CD8-positive, alpha-beta T cell (primary cell): ENCODE measurements at regions of chr4 and their contacts with region 1.

Region 1: GRCh38 chr4:145936142-145936996 is 2.3 kb downstream of the ZNF827 start:
- DNase-seq: peak; percentile 41 to 88 (median 70)
- ATAC-seq: peak; percentile 51
- H3K4me3 ChIP-seq: peak overlapping the region; percentile 83 to 84
- H3K4me3 Mint-ChIP-seq: peak overlapping the region; percentile 94
- H3K27ac ChIP-seq: peak overlapping the region; percentile 58 to 63
- H3K27ac Mint-ChIP-seq: peak overlapping the region; percentile 97
- H3K4me1 ChIP-seq: peaks cover 28% of the 10 kb centered on the region
- H3K4me1 Mint-ChIP-seq: peaks cover 47% of the 10 kb centered on the region
- H3K27me3 ChIP-seq: no peaks in the 10 kb centered on the region
- H3K27me3 Mint-ChIP-seq: no peaks in the 10 kb centered on the region
- CTCF ChIP-seq: peak; percentile 27

Region 2: GRCh38 chr4:145618932-145619638 is 317.3 kb before region 1 on chr4 and contains the start of gene MMAA:
- CTCF ChIA-PET with region 1: interaction called, 3 read pairs
- POLR2A ChIA-PET with region 1: interaction called, 4 read pairs
- intact Hi-C with region 1: loop called (anchors 1 to 2 kb)
- DNase-seq: peak; percentile 86 to 97 (median 94)
- ATAC-seq: peak; percentile 93
- H3K4me3 ChIP-seq: peak within 1 kb of the TSS; percentile 89 to 97
- H3K4me3 Mint-ChIP-seq: peak within 1 kb of the TSS; percentile 96
- H3K27ac ChIP-seq: peak within 1 kb of the TSS; percentile 91 to 97
- H3K27ac Mint-ChIP-seq: peak within 1 kb of the TSS; percentile 98
- H3K4me1 ChIP-seq: peaks cover 22% of the 10 kb centered on the region
- H3K4me1 Mint-ChIP-seq: peaks cover 45% of the 10 kb centered on the region
- H3K27me3 ChIP-seq: no peaks in the 10 kb centered on the region
- H3K27me3 Mint-ChIP-seq: no peaks in the 10 kb centered on the region
- CTCF ChIP-seq: peak; percentile 38
- total RNA-seq, gene MMAA: 7.6 to 9.4 TPM

Region 3: GRCh38 chr4:145871209-145871608 is 65.2 kb before region 1 on chr4:
- CTCF ChIA-PET with region 1: no interaction called
- POLR2A ChIA-PET with region 1: no interaction called
- intact Hi-C with region 1: no loop called
- DNase-seq: no peak
- ATAC-seq: no peak
- H3K4me3 ChIP-seq: no peak overlapping the region
- H3K4me3 Mint-ChIP-seq: no peak overlapping the region
- H3K27ac ChIP-seq: no peak overlapping the region
- H3K27ac Mint-ChIP-seq: no peak overlapping the region
- H3K4me1 ChIP-seq: no peaks in the 10 kb centered on the region
- H3K4me1 Mint-ChIP-seq: peaks cover 26% of the 10 kb centered on the region
- H3K27me3 ChIP-seq: no peaks in the 10 kb centered on the region
- H3K27me3 Mint-ChIP-seq: no peaks in the 10 kb centered on the region
- CTCF ChIP-seq: no peak

Region 4: DNA sequence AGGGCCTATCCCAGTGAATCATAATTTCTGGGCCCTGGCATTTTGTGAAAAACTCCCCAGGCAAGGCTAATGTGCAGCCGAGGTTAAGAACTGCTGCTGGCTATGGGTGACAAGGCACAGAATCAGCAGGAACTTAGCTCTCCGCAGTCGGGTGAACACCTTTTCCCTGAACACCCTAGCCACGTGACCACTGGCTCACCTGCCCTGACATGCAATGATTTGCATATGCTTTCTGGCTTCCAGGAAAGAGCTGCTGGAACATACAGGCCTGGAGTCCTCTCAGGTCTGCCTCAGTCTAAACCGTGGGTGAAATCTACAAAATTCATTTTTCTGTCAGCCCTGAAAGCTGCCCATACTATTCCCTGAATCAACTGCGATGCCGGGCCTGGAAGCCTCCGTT is 54.4 kb before region 1 on chr4:
- CTCF ChIA-PET with region 1: no interaction called
- POLR2A ChIA-PET with region 1: no interaction called
- intact Hi-C with region 1: loop called in 1 of 2 experiments (anchors 5 kb)
- DNase-seq: no peak
- ATAC-seq: no peak
- H3K4me3 ChIP-seq: no peak overlapping the region
- H3K4me3 Mint-ChIP-seq: no peak overlapping the region
- H3K27ac ChIP-seq: no peak overlapping the region
- H3K27ac Mint-ChIP-seq: no peak overlapping the region
- H3K4me1 ChIP-seq: no peaks in the 10 kb centered on the region
- H3K4me1 Mint-ChIP-seq: peaks cover 37% of the 10 kb centered on the region
- H3K27me3 ChIP-seq: no peaks in the 10 kb centered on the region
- H3K27me3 Mint-ChIP-seq: no peaks in the 10 kb centered on the region
- CTCF ChIP-seq: no peak

Region 5: DNA sequence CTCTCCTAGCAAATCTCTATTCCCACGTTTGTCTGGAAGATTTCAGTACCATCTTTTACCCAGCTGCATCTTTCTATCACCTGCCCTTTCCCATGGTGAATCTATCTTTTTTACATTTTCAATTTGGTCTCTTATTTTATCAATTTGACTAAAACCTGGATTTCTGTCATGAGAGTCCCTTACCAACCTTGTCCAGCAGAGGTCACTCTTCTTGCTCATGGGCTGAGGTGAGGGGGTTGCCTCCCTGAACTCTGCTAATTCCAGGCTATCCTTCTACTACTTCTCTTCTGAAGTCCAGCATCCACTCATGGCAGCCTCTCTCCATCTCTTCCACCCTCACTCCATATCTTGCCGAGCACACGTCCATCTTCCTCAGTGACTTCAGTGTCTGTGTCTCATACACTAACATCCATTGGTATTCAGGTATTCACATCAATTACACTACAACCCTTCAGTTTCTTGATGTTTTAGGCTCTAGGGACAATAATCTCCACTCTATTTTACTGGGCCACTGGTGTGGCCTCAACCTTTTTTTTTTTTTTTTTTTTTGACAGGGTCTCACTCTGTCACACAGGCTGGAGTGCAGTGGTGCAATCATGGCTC is 20.0 kb after region 1 on chr4:
- CTCF ChIA-PET with region 1: interaction called, 7 read pairs
- POLR2A ChIA-PET with region 1: no interaction called
- intact Hi-C with region 1: loop called in 1 of 2 experiments (anchors 1 kb)
- DNase-seq: peak in 7 of 9 experiments; percentile 9 to 68 (median 33)
- ATAC-seq: peak; percentile 72
- H3K4me3 ChIP-seq: no peak overlapping the region
- H3K4me3 Mint-ChIP-seq: no peak overlapping the region
- H3K27ac ChIP-seq: no peak overlapping the region
- H3K27ac Mint-ChIP-seq: no peak overlapping the region
- H3K4me1 ChIP-seq: no peaks in the 10 kb centered on the region
- H3K4me1 Mint-ChIP-seq: no peaks in the 10 kb centered on the region
- H3K27me3 ChIP-seq: no peaks in the 10 kb centered on the region
- H3K27me3 Mint-ChIP-seq: peaks cover 2% of the 10 kb centered on the region
- CTCF ChIP-seq: peak; percentile 71

Region 6: DNA sequence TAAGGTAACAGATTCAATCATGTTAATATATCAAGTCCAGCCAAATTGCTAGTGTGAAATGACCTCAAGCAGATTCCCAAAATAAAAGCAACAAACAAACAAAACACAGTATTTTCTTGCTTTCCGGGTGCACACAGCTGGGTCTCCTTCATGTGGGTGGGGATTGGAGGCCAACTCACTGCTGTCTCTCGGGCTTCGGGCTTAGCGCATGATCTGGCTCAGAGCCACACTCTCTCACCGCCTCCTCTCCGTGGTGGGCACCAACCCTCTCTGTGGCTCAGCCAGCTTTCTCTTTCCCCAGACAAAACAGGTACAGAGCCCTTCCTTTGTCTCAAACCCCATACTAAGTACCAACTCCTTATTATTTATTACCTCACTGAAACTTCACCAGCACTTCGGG is 275.1 kb after region 1 on chr4:
- CTCF ChIA-PET with region 1: no interaction called
- POLR2A ChIA-PET with region 1: no interaction called
- intact Hi-C with region 1: no loop called
- DNase-seq: no peak
- ATAC-seq: no peak
- H3K4me3 ChIP-seq: no peak overlapping the region
- H3K4me3 Mint-ChIP-seq: no peak overlapping the region
- H3K27ac ChIP-seq: no peak overlapping the region
- H3K27ac Mint-ChIP-seq: no peak overlapping the region
- H3K4me1 ChIP-seq: no peaks in the 10 kb centered on the region
- H3K4me1 Mint-ChIP-seq: no peaks in the 10 kb centered on the region
- H3K27me3 ChIP-seq: no peaks in the 10 kb centered on the region
- H3K27me3 Mint-ChIP-seq: peaks cover 8% of the 10 kb centered on the region
- CTCF ChIP-seq: no peak

Region 7: DNA sequence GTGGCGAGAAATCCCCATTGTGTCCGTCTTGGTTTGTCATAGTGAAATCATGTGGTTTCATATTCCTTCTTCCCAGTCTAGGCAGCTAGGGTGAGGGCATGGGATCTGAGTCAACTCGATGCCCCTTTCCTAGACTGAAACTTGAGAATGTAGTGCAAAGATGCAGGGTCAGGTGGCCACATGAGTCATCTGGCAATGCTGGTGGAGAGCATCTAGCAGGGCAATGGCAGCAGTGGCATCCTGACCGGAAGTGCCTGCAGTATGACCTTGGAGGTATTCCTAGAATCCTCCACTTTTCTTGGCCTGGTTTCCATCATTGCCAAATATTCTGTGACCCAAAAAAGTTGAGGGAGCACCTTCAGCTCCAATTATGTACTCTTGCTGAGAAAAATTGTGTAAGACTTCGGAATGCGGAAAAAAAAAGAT is 1641.7 kb after region 1 on chr4:
- CTCF ChIA-PET with region 1: no interaction called
- POLR2A ChIA-PET with region 1: no interaction called
- intact Hi-C with region 1: no loop called
- DNase-seq: no peak
- ATAC-seq: no peak
- H3K4me3 ChIP-seq: no peak overlapping the region
- H3K4me3 Mint-ChIP-seq: no peak overlapping the region
- H3K27ac ChIP-seq: no peak overlapping the region
- H3K27ac Mint-ChIP-seq: no peak overlapping the region
- H3K4me1 ChIP-seq: no peaks in the 10 kb centered on the region
- H3K4me1 Mint-ChIP-seq: no peaks in the 10 kb centered on the region
- H3K27me3 ChIP-seq: no peaks in the 10 kb centered on the region
- H3K27me3 Mint-ChIP-seq: peaks cover 6% of the 10 kb centered on the region
- CTCF ChIP-seq: no peak

Region 8: GRCh38 chr4:147617173-147617840 is 1680.9 kb after region 1 on chr4 and contains the start of gene TMEM184C:
- CTCF ChIA-PET with region 1: no interaction called
- POLR2A ChIA-PET with region 1: no interaction called
- intact Hi-C with region 1: loop called in 1 of 2 experiments (anchors 5 kb)
- DNase-seq: peak; percentile 98 to 99 (median 99)
- ATAC-seq: peak; percentile 96
- H3K4me3 ChIP-seq: peak within 1 kb of the TSS; percentile 62 to 74
- H3K4me3 Mint-ChIP-seq: peak within 1 kb of the TSS; percentile 91
- H3K27ac ChIP-seq: peak within 1 kb of the TSS; percentile 81
- H3K27ac Mint-ChIP-seq: peak within 1 kb of the TSS; percentile 95
- H3K4me1 ChIP-seq: peaks cover 40% of the 10 kb centered on the region
- H3K4me1 Mint-ChIP-seq: peaks cover 46% of the 10 kb centered on the region
- H3K27me3 ChIP-seq: no peaks in the 10 kb centered on the region
- H3K27me3 Mint-ChIP-seq: no peaks in the 10 kb centered on the region
- CTCF ChIP-seq: no peak
- total RNA-seq, gene TMEM184C: 10.9 to 11.7 TPM

Region 9: DNA sequence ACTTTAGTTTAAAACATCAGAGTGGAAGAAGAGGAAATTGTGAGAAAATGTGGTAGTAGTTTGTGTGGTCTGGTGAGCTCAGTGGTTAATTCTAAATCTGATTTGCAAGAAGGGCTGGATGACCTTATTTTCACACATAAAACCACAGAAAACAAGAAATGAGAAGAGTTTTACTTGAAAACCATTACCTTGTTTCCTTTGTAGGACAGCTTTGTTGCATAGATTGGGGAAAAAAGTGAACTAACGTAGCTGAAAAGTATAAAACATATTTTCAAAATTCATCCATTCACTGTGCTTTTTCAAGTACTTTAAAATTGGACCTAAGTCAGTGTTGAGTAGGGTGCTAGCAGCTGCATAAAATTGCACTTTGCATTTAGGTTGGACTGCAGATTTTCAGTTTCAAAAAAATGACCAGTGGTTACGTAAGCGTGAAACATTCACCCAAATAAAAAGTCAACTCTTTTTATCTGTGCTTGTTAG is 2006.8 kb after region 1 on chr4:
- CTCF ChIA-PET with region 1: no interaction called
- POLR2A ChIA-PET with region 1: no interaction called
- intact Hi-C with region 1: no loop called
- DNase-seq: peak in 2 of 9 experiments; percentile 50 to 65
- ATAC-seq: peak; percentile 51
- H3K4me3 ChIP-seq: peak overlapping the region in 1 of 2 experiments; percentile 19
- H3K4me3 Mint-ChIP-seq: peak overlapping the region; percentile 12
- H3K27ac ChIP-seq: peak overlapping the region in 1 of 2 experiments; percentile 48
- H3K27ac Mint-ChIP-seq: peak overlapping the region; percentile 49
- H3K4me1 ChIP-seq: peaks cover 13% of the 10 kb centered on the region
- H3K4me1 Mint-ChIP-seq: peaks cover 30% of the 10 kb centered on the region
- H3K27me3 ChIP-seq: no peaks in the 10 kb centered on the region
- H3K27me3 Mint-ChIP-seq: no peaks in the 10 kb centered on the region
- CTCF ChIP-seq: no peak